ENCODE measurements at regions of chr2 and their contacts with region 1.

Region 1: GRCh38 chr2:237674731-237675276 is 47.4 kb downstream of the LRRFIP1 start:
- DNase-seq: peak; percentile 66
- ATAC-seq: peak; percentile 93
- H3K4me3 ChIP-seq: peak overlapping the region in 2 of 3 experiments; percentile 13 to 53; a peak in 3 of 6 replicates
- H3K27ac ChIP-seq: peak overlapping the region; percentile 46
- H3K4me1 ChIP-seq: peaks cover 83% of the 10 kb centered on the region
- H3K27me3 ChIP-seq: no peaks in the 10 kb centered on the region
- CTCF ChIP-seq: peak; percentile 36; the same call in 1 of the 2 replicates
- EP300 ChIP-seq: no peak; a peak in 1 of 4 replicates
- POLR2A ChIP-seq: peak; percentile 24 to 34; a peak in 1 of 4 replicates
- RAD21 ChIP-seq: no peak

Region 2: DNA sequence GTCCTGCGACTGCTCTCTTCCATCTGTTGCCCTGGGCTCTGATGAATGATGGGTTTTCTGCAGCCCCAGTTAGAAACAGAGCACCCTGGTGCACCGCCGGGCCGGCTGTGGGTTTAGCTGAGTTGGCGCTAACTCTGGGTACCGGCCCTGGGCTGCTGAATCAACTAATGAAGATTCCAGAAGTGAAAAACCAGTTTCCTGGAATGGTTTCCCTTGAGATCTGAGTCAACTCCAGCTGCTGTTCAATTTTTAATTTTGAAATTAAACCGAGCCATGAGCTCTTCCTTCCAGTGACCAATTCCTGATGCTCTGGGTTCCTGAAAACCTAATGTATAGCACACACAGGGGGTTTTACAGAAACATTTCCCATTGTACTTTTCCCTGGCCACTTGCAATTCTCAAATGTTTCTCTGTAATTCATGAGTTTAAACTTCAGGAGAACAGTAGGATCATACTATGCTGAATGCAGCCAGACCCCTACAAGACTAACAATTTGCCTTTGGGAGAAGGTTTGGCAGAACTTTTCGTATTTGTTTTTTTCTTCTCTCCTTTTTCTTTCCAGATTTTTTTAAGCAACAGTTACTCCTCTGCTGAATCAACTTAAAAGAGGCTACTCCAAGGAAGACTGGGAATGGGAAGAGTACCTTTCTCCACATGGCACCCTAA is 266.3 kb before region 1 on chr2:
- CTCF ChIA-PET with region 1: no interaction called
- POLR2A ChIA-PET with region 1: no interaction called
- in situ Hi-C with region 1: no loop called
- intact Hi-C with region 1: no loop called
- DNase-seq: no peak
- ATAC-seq: no peak
- H3K4me3 ChIP-seq: no peak overlapping the region
- H3K27ac ChIP-seq: no peak overlapping the region
- H3K4me1 ChIP-seq: no peaks in the 10 kb centered on the region
- H3K27me3 ChIP-seq: peaks cover 9 to 79% of the 10 kb centered on the region in 2 experiments; a peak in 4 of 5 replicates
- CTCF ChIP-seq: no peak
- EP300 ChIP-seq: no peak
- POLR2A ChIP-seq: no peak
- RAD21 ChIP-seq: no peak

Region 3: DNA sequence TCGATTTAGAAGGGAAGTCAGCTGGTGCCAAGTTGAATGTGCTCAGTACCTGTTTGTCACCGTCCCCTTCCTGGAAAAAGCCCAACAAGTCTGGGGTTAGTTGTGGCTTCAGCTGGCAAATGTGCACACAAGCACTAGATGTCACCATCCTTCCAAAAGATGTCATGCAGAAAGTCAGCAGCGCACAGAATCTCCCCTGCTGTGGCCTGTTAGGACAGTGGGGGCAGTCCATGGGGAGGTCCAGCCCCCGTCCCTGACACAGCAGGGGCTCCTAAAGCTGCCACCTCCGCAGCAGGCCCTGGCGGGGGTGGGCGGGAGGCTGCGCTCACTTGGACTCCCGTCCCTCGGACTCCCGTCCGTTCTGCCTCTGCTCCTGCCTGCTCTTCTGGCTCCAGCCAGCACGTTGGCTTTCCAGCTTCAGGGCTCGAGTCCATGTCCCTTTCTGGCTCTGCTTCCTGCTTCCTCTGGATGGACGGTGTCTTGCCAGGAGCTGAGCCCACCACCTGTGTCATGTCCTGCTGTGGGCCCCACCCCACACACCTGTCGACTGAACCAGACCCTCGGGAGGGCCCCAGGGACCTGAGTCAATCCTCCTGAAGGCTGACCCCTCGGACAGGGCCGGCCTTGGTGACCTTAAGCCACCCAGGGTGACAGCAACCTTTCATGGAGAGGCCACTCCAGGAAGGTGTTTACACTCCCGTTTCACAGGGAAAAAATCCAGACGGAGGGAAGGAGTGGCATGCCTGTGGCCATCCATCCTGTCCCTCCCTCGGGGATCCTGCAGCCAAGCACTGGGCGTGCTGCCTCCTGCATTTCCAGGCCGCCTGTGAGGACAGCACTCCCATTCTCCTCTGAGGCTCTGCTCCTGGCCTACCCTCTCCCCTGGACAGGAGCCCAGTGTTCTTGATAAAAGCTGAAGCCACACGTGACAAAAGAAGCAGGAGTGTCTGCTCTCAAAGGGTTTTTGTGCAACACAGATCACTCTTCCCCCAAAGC is 92.8 kb before region 1 on chr2:
- CTCF ChIA-PET with region 1: no interaction called
- POLR2A ChIA-PET with region 1: no interaction called
- in situ Hi-C with region 1: loop called (anchors 5 kb)
- intact Hi-C with region 1: no loop called
- DNase-seq: peak; percentile 82
- ATAC-seq: peak; percentile 66
- H3K4me3 ChIP-seq: peak overlapping the region in 1 of 3 experiments; percentile 38; a peak in 3 of 6 replicates
- H3K27ac ChIP-seq: peak overlapping the region; percentile 66
- H3K4me1 ChIP-seq: peaks cover 57% of the 10 kb centered on the region
- H3K27me3 ChIP-seq: no peaks in the 10 kb centered on the region
- CTCF ChIP-seq: peak; percentile 82
- EP300 ChIP-seq: peak in 1 of 2 experiments; percentile 52; a peak in 2 of 4 replicates
- POLR2A ChIP-seq: no peak; a peak in 1 of 4 replicates
- RAD21 ChIP-seq: peak; percentile 70; the same call in 1 of the 2 replicates

Region 4: DNA sequence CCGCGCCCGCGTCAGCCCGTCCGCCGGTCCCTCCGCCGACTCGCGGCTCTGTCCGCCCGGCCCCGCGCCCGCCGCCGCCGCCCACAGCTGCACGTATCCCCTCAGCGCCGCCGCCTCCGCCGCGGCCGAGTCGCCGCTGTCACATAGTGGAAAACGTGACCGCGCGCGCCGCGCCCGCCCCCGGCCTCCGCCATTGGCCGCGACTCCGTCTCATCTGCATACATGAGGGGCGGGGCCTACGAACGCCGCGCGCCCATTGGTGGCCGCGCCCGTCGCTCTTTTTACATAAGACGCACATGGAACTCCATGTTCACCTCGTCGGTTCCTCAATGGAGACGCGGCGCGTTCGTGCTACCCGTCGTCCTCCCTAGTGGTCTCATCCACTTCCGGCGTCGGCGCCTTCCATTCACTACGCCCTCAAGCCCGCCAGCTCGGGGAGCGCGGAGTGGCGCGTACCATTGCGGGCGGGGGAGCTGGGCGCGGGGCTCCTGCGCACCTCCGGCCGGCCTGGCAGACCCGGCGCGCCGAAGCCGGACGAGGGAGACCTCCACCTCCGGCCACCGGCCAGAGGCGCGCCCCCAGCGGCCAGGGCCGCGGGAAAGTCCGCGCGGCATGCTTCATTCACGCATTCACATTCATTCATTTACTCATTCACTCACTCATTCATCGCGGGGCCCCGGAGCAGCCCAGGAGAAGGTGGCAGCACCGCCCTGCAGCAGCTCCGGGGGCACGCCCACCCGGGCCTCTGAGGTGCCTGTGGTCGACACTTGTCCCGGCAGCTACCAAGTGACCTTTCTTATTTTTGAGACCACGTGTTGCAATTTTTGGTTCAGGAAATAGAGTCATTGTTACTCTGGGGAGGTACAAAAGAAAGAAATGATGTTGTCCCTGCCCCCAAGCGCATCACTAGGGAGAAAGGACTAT is 614.1 kb after region 1 on chr2:
- CTCF ChIA-PET with region 1: no interaction called
- POLR2A ChIA-PET with region 1: no interaction called
- in situ Hi-C with region 1: no loop called
- intact Hi-C with region 1: no loop called
- DNase-seq: peak; percentile 99
- ATAC-seq: peak; percentile 77
- H3K4me3 ChIP-seq: peak overlapping the region; percentile 75 to 99 (median 87)
- H3K27ac ChIP-seq: peak overlapping the region; percentile 99
- H3K4me1 ChIP-seq: peaks cover 63% of the 10 kb centered on the region
- H3K27me3 ChIP-seq: no peaks in the 10 kb centered on the region; a peak in 1 of 5 replicates
- CTCF ChIP-seq: peak; percentile 46
- EP300 ChIP-seq: no peak
- POLR2A ChIP-seq: peak in 1 of 2 experiments; percentile 83; a peak in 2 of 4 replicates
- RAD21 ChIP-seq: peak; percentile 79

Measured in HepG2 (cell line).